HepG2 (cell line): ENCODE measurements at regions of chr3 and their contacts with region 1.

Region 1: DNA sequence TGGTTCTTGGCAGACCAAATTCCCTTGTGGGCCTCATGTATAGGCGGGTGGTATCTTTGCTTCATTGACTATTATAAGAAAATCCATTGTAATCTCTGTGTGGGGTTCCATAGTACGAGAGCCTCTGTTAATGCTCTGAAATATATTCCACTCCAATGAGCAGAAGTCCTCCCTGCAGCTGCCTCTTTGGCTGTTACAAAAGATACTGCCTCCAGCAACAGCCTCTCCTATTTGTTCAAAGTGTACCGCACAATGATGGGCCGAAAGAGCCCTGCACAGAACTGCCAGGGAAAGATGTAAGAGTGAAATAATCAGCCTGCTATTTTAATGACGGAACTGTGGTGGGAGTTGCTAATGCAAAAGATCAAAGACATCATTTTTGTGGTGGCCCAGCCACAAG is 48.9 kb downstream of the GRK7 start:
- DNase-seq: no peak
- ATAC-seq: no peak
- H3K4me3 ChIP-seq: no peak overlapping the region
- H3K27ac ChIP-seq: no peak overlapping the region
- H3K4me1 ChIP-seq: no peaks in the 10 kb centered on the region
- H3K27me3 ChIP-seq: peaks cover 2 to 11% of the 10 kb centered on the region in 2 experiments; a peak in 2 of 5 replicates
- CTCF ChIP-seq: no peak
- EP300 ChIP-seq: no peak
- POLR2A ChIP-seq: no peak
- RAD21 ChIP-seq: no peak

Region 2: DNA sequence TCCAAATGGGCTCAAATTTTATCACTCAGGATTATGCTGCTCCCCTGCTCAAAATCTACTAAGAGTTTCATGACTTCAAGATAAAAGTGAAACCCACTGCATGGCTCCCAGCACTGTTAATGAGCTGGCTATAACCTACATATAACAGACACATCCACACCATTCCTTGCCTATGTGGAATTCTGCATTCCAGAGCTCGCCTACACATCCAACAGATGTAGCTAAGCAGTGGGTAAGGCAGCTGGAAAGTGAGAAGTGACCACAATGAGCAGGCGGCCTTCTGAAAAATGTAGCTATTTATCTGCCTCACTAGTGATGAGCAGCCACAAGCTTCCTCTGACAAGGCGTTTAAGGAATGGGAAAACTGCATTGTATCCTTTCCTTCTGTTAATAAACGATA is 1226.3 kb before region 1 on chr3:
- CTCF ChIA-PET with region 1: no interaction called
- POLR2A ChIA-PET with region 1: no interaction called
- in situ Hi-C with region 1: no loop called
- intact Hi-C with region 1: no loop called
- DNase-seq: no peak
- ATAC-seq: no peak
- H3K4me3 ChIP-seq: no peak overlapping the region
- H3K27ac ChIP-seq: no peak overlapping the region
- H3K4me1 ChIP-seq: no peaks in the 10 kb centered on the region
- H3K27me3 ChIP-seq: no peaks in the 10 kb centered on the region
- CTCF ChIP-seq: no peak
- EP300 ChIP-seq: no peak
- POLR2A ChIP-seq: no peak
- RAD21 ChIP-seq: no peak

Region 3: GRCh38 chr3:141913150-141913811 is 101.2 kb after region 1 on chr3:
- CTCF ChIA-PET with region 1: no interaction called
- POLR2A ChIA-PET with region 1: no interaction called
- in situ Hi-C with region 1: no loop called
- intact Hi-C with region 1: no loop called
- DNase-seq: peak; percentile 62
- ATAC-seq: peak; percentile 83
- H3K4me3 ChIP-seq: no peak overlapping the region
- H3K27ac ChIP-seq: no peak overlapping the region
- H3K4me1 ChIP-seq: no peaks in the 10 kb centered on the region
- H3K27me3 ChIP-seq: no peaks in the 10 kb centered on the region
- CTCF ChIP-seq: peak; percentile 80
- EP300 ChIP-seq: no peak
- POLR2A ChIP-seq: no peak
- RAD21 ChIP-seq: peak; percentile 65; the same call in 1 of the 2 replicates

Region 4: DNA sequence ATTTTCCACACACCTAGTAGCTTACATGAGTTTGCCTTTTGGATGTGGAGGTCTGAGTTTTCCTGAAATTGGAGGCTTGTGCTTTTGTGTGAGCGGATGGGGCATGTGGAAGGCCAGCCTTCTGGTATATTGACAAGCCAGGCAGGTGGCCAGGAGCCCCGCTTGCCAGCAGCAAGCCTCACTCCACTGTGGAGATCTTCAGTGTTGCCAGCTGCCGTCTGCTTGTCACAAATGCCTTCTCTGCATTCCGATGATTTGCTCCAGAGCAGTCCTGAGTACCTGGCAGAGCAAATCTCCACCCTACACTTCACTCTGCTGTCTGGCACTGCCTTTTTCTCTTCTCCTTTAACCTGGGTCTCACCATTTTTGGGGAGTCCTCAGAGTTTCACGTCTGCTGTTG is 1278.4 kb after region 1 on chr3:
- CTCF ChIA-PET with region 1: no interaction called
- POLR2A ChIA-PET with region 1: no interaction called
- in situ Hi-C with region 1: no loop called
- intact Hi-C with region 1: loop called (anchors 10 kb)
- DNase-seq: no peak
- ATAC-seq: no peak; the same call in 2 of the 3 replicates
- H3K4me3 ChIP-seq: no peak overlapping the region
- H3K27ac ChIP-seq: no peak overlapping the region
- H3K4me1 ChIP-seq: no peaks in the 10 kb centered on the region
- H3K27me3 ChIP-seq: peaks cover 0 to 6% of the 10 kb centered on the region in 2 experiments; a peak in 3 of 5 replicates
- CTCF ChIP-seq: no peak
- EP300 ChIP-seq: no peak
- POLR2A ChIP-seq: no peak
- RAD21 ChIP-seq: no peak